Mammary epithelial cell (primary cell): ENCODE measurements at regions of chrX and their contacts with region 1.

Region 1: DNA sequence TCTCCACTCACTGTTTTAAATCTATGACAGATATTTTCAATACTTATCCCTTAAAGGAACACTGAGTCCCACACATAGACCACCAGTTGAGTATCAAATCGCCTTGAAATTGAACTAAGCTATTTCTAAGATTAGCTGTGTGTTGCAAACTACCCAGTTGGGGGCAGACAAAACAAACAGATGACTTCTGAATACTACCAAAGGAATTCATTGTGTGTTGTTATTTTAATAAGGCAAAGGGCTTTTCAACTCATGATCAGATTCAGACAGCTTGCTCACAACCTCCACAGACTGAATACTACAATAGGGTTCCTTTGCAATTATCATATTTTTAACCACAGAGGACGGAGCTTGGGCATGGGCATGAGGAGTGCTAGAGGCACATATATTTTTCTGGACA is 283.0 kb upstream of the GPC4 start:
- DNase-seq: no peak
- H3K4me3 ChIP-seq: no peak overlapping the region
- H3K27ac ChIP-seq: no peak overlapping the region
- H3K4me1 ChIP-seq: no peaks in the 10 kb centered on the region
- H3K27me3 ChIP-seq: peaks cover 8% of the 10 kb centered on the region
- CTCF ChIP-seq: peak in 1 of 2 donors; percentile 29

Region 2: GRCh38 chrX:133638285-133638684 is 60.0 kb before region 1 on chrX:
- CTCF ChIA-PET with region 1: no interaction called
- dilution Hi-C with region 1: no loop called
- in situ Hi-C with region 1: no loop called
- intact Hi-C with region 1: no loop called
- DNase-seq: peak; percentile 69
- H3K4me3 ChIP-seq: no peak overlapping the region
- H3K27ac ChIP-seq: no peak overlapping the region
- H3K4me1 ChIP-seq: peaks cover 17% of the 10 kb centered on the region
- H3K27me3 ChIP-seq: no peaks in the 10 kb centered on the region
- CTCF ChIP-seq: no peak

Region 3: DNA sequence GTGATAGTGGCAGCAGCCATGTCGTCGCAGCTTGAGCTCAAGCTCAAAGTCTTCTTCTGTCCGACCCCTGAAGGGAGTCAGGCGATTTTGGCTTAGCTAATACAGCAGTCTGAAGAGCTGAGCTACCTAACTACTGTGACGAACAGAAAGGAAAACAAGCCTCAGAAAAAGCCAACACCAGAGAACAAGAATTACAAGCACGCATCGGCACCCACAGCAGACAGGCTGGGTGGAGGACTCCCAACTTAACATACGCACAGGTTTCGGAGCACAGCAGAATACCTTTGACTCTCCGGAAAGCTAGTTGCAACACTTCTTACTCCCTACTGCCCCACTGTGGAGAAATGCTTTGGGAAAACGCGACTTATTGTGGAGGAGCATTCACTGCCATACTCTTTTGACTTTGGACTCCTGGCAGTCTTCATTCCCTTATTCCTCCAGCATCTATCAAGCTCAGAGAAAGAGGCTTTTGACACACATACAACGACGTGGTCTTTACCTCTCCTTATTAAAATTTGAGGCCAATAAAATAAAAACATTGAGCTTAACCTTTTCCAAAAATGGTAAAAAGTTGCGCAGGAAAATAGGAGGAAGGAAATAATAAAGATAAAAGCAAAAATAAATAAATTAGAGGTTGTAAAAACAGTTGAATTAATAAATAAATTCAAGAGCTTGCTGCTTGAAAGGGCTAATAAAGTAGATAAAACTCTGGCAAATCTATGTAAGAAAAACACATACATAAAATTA is 328.4 kb after region 1 on chrX:
- CTCF ChIA-PET with region 1: no interaction called
- dilution Hi-C with region 1: no loop called
- in situ Hi-C with region 1: no loop called
- intact Hi-C with region 1: loop called (anchors 10 kb)
- DNase-seq: peak; percentile 50
- H3K4me3 ChIP-seq: no peak overlapping the region
- H3K27ac ChIP-seq: no peak overlapping the region
- H3K4me1 ChIP-seq: no peaks in the 10 kb centered on the region
- H3K27me3 ChIP-seq: no peaks in the 10 kb centered on the region
- CTCF ChIP-seq: peak; percentile 49 to 65